ENCODE measurements at regions of chr5 and their contacts with region 1.

Region 1: DNA sequence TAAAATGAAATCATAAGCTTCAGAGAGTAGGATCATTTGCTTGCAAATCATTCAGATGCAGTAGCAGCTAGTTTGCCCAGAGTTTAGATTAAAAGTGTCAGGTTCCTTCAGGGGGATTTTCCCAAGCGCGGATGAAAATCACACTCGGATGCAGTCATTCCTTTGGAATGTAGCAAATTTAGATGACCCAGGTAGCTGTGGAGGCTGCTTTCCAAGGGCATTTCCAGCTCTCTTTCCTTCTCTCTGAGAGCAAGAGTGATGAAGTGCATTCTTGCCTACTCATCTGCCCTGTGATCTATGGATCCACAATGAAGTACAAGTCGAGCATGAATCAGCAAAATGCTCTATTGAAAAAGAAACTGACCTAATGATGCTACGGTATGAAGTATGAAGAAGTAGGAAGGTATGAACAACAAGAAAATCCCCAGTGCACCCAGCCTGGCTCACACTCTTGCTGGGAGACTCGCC is 200.2 kb downstream of the PLK2 start:
- DNase-seq: peak; percentile 99
- H3K4me3 ChIP-seq: peak overlapping the region in 2 of 3 experiments; percentile 7 to 22
- H3K27ac ChIP-seq: peak overlapping the region; percentile 90
- H3K4me1 ChIP-seq: peaks cover 28% of the 10 kb centered on the region
- H3K27me3 ChIP-seq: no peaks in the 10 kb centered on the region
- CTCF ChIP-seq: no peak

Region 2: GRCh38 chr5:58188262-58188651 is 71.5 kb before region 1 on chr5:
- CTCF ChIA-PET with region 1: no interaction called
- dilution Hi-C with region 1: no loop called
- in situ Hi-C with region 1: no loop called
- intact Hi-C with region 1: loop called (anchors 5 kb)
- DNase-seq: peak; percentile 91
- H3K4me3 ChIP-seq: no peak overlapping the region
- H3K27ac ChIP-seq: peak overlapping the region; percentile 86
- H3K4me1 ChIP-seq: peaks cover 44% of the 10 kb centered on the region
- H3K27me3 ChIP-seq: no peaks in the 10 kb centered on the region
- CTCF ChIP-seq: peak; percentile 33 to 45

Region 3: DNA sequence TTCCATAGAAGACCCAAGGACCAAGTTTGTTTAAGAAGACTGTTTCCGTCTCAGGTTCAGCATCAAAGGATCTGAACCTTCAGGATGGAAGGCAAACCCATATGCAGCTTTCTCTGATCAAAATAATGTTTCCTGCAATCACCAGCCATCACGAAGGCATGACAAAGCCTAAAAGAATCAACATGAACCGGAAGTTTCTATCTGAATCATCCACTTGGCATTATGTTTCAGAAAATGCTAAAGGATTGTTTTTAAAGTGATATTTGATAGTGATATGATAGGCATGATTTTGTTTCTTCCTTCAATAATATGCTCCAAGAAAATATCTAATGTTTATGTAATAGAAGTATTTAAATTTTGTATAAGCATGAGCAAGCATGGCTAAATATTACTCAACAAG is 19.4 kb before region 1 on chr5:
- CTCF ChIA-PET with region 1: no interaction called
- dilution Hi-C with region 1: no loop called
- in situ Hi-C with region 1: no loop called
- intact Hi-C with region 1: loop called (anchors 1 kb)
- DNase-seq: peak; percentile 64
- H3K4me3 ChIP-seq: no peak overlapping the region
- H3K27ac ChIP-seq: peak overlapping the region; percentile 11
- H3K4me1 ChIP-seq: peaks cover 14% of the 10 kb centered on the region
- H3K27me3 ChIP-seq: no peaks in the 10 kb centered on the region
- CTCF ChIP-seq: no peak